ENCODE measurements at regions of chr4 and their contacts with region 1.

Region 1: GRCh38 chr4:154457471-154457870 is 34.1 kb downstream of the DCHS2 start:
- DNase-seq: no peak
- CTCF ChIP-seq: no peak

Region 2: DNA sequence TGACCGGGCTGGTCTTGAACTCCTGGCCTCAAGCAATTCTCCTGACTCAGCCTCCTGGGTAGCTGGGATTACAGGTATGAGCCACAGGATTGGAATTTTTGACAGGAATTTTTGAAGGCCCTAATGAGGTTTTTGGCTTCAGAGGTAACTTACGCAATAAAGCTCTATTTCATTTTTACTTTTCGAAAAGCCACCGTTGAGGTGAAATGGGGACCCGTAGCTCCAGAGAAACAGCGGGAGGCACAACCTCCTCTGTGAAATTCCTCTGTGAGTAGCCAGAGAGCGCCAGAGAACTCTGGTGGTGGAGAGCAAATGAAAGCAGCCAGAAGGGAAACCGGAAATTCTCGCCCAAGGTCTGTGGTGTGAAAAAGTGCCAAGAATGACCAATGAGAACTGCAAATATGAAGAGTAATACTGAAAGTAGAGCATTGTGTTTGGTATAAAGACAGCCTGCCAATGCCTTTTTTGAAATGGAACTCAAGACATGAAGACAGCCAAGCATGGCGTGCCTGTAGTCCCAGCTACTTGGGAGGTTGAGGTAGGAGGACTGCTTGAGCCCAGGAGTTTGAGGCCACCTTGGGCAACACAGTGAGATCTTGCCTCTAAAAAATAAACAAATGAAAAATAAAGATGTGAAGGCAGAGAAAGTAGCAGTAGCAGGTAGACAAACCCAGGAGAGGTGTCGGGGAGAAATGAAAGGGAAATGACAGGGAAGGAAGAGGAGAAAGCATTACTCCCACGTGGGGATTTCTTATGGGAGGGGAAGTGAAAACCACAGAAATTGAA is 1024.3 kb before region 1 on chr4:
- CTCF ChIA-PET with region 1: no interaction called
- POLR2A ChIA-PET with region 1: no interaction called
- DNase-seq: peak; percentile 83
- CTCF ChIP-seq: peak; percentile 82

Region 3: GRCh38 chr4:154189346-154189745 is 268.1 kb before region 1 on chr4:
- CTCF ChIA-PET with region 1: no interaction called
- POLR2A ChIA-PET with region 1: no interaction called
- DNase-seq: no peak
- CTCF ChIP-seq: no peak

Region 4: DNA sequence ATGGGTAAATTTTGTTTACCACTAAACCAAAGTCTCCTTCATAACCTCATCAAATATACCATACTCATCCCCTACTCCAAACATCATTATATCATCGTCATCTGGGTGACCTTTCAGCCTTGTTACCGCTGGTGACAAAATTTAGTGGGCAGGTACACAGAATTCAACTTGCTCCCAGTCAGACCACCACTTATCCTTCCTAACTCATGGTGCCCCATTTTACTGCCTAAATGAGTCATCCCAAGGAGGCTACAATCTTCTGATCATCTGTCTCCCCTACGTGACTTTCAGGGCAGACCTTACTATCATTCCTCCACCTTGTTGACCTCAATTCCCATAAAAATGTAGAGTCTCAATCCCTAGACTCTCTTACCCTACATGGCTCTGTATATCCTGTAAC is 15.5 kb before region 1 on chr4:
- CTCF ChIA-PET with region 1: interaction called, 11 read pairs
- POLR2A ChIA-PET with region 1: no interaction called
- DNase-seq: no peak
- CTCF ChIP-seq: no peak